Left ventricle myocardium superior (tissue), 1 donor: ENCODE measurements at regions of chr12 and their contacts with region 1.

Region 1: DNA sequence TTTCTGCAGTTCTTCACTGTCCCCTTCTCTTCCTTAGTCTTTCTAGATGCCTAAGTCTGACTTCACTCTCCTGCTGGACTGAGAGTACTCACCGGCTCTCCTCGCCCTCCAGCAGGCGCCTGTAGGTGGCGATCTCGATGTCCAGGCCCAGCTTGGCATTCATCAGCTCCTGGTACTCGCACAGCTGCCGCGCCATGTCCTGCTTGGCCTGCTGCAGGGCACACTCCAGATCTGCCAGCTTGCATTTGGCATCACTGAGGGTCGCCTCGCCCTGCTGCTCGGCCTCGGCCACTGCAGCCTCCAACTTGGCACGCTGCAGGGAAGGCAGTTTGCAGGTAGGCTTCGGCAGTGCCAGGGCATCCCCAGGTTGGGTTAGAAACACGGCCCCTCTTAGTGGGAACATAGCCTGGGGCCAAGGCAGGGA is 5.2 kb downstream of the KRT84 start:
- DNase-seq: peak; percentile 50
- ATAC-seq: peak; percentile 52

Region 2: DNA sequence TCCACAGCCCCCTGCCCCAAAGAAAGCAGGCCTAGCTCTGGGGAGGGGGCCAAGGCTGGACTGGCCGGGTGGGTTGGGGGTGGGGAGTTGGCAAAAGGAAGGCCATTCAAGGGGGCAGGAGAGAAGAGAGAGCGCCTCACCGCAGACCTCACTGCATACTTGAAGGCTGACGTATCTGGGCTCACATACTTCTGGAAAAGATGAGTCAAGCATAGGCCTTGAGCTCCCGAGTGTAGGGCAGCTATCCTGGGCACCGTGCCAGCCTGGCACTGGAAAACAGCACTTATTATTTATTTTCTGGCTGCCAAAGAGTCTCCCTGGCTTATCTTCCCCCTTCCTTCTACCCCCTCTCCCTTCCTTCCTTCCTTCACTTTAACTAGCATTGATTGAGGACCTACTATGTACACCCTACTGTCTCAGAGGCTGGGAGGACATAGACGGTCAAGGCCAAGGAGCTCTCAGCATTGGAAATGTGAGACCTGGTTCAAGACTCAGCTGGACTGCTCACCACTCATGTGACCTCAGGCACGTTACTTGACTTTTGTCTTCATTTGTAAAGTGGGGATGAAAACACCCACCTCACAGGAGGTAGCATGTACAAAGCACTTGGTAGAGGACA is 188.0 kb before region 1 on chr12:
- intact Hi-C with region 1: no loop called
- DNase-seq: peak; percentile 87
- ATAC-seq: peak; percentile 94

Region 3: GRCh38 chr12:52416383-52416750 is 36.1 kb after region 1 on chr12:
- intact Hi-C with region 1: no loop called
- DNase-seq: no peak
- ATAC-seq: peak; percentile 96

Region 4: GRCh38 chr12:52506858-52507715 is 126.8 kb after region 1 on chr12:
- intact Hi-C with region 1: loop called (anchors 5 kb)
- DNase-seq: no peak
- ATAC-seq: peak; percentile 68